Panc1 (cell line): ENCODE measurements at regions of chr1 and their contacts with region 1.

Region 1: DNA sequence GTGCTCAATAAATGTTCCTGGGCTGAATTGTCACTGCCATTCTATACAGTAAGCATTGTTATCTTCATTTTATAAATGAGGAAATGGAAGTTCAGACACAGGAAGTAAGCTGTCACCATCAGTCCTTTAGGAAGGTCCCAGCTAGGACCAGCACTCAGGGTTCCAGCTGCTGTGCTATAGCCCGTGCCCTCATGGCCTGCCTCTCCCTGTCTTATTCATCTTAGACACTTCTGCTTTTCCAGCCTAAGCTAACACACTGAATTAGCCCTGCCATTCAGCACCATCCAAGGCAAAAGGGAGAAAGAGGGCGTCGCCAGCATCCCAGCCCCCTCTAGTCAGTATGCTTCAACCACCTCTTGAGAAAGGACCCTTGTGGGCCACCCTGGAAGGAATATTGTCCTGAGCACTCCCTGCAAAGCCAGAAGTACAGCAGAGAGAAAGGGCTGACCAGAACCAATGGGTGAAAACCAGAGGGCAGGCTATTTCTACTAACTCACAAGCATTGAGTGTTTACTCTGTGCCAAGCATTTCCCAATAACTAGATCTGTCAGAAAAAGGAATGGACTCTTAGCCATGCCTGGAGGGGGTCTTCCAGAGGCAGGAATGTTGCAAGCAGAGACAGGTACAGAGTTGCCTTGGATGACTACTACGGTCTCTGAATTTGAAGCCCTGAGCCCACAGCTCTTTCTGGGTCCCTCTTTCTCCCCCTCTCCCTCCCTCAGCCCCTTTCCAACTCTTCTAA is 77.9 kb upstream of the NFIA start:
- DNase-seq: no peak
- ATAC-seq: no peak
- H3K4me3 ChIP-seq: no peak overlapping the region
- H3K27ac ChIP-seq: no peak overlapping the region
- H3K4me1 ChIP-seq: no peaks in the 10 kb centered on the region
- H3K27me3 ChIP-seq: peaks cover 3% of the 10 kb centered on the region; the same call in 1 of the 2 replicates
- CTCF ChIP-seq: no peak

Region 2: DNA sequence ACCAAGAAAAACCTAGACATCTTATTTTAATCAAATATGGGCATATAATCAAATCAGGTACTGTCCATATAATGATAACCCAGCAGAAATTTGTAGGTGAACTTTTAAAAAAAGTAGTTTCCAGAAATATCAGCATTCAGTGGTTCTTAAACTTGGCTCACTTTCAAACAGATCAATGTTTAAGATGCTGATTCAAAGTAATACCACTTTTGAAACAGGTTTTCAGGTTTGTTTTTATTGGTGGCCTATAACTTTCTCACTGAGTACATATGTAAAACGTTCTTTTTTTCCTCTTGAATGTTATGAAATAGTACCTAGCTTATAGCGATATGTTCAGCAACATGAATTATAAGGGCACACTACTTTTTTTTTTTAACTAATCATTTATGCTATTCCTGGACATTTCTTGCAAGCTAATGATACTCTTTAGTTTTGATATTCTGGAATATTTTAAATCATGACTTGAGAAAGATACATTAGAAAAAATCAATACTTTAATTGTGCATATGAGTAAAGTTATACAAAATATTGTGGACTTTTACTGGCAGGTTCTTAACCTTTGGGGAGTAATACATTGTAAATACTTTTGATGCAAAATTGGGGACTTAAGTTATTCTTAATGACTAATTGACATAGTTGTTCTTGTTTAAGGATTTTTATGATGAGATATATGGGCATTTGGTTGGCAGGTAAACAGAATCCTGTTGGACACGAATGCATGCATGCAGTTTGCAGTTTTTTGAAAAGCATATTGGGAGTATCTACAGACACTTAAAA is 81.0 kb after region 1 on chr1:
- CTCF ChIA-PET with region 1: no interaction called
- POLR2A ChIA-PET with region 1: interaction called, 23 read pairs
- in situ Hi-C with region 1: no loop called
- intact Hi-C with region 1: no loop called
- DNase-seq: no peak
- ATAC-seq: no peak
- H3K4me3 ChIP-seq: no peak overlapping the region
- H3K27ac ChIP-seq: peak overlapping the region; percentile 54; the same call in 1 of the 2 replicates
- H3K4me1 ChIP-seq: peaks cover 53% of the 10 kb centered on the region
- H3K27me3 ChIP-seq: no peaks in the 10 kb centered on the region
- CTCF ChIP-seq: no peak

Region 3: DNA sequence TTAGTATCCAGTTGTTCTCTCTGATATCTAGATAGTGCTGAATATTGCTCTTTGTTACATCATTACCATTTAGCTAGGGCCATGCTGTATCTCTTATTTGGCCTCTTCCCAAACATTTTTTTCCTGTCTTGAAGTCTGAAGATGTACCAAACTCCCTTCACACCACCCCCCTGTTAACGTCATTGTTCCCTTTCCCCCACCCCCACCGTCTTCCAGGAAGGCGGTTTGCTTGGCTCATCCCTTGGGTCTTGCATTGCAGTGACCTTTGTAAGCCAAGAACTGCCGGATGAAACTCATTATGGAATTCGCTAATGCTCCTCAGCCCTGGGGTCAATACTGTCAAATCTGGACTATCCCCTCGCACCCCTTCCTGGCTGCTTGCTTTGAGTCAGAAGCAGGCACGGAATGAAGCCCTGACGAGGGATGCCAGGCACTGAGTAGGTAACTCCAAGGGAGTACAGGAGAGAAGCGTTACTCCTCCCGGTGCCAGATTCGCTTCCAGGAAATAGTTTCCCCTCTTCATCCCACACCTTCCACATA is 437.4 kb after region 1 on chr1:
- CTCF ChIA-PET with region 1: no interaction called
- POLR2A ChIA-PET with region 1: no interaction called
- in situ Hi-C with region 1: no loop called
- intact Hi-C with region 1: no loop called
- DNase-seq: no peak
- ATAC-seq: no peak
- H3K4me3 ChIP-seq: no peak overlapping the region
- H3K27ac ChIP-seq: no peak overlapping the region
- H3K4me1 ChIP-seq: no peaks in the 10 kb centered on the region
- H3K27me3 ChIP-seq: no peaks in the 10 kb centered on the region
- CTCF ChIP-seq: no peak